A549 (cell line): ENCODE measurements at regions of chr5 and their contacts with region 1.

Region 1: GRCh38 chr5:76175051-76175666 is 92.0 kb downstream of the SV2C start:
- DNase-seq: peak; percentile 59 to 74
- ATAC-seq: peak; percentile 83 to 95; a peak in 5 of 6 replicates
- H3K4me3 ChIP-seq: no peak overlapping the region
- H3K27ac ChIP-seq: no peak overlapping the region
- H3K4me1 ChIP-seq: no peaks in the 10 kb centered on the region
- CTCF ChIP-seq: peak; percentile 77
- EP300 ChIP-seq: no peak
- POLR2A ChIP-seq: no peak
- RAD21 ChIP-seq: peak; percentile 59 to 67; a peak in 4 of 5 replicates

Region 2: DNA sequence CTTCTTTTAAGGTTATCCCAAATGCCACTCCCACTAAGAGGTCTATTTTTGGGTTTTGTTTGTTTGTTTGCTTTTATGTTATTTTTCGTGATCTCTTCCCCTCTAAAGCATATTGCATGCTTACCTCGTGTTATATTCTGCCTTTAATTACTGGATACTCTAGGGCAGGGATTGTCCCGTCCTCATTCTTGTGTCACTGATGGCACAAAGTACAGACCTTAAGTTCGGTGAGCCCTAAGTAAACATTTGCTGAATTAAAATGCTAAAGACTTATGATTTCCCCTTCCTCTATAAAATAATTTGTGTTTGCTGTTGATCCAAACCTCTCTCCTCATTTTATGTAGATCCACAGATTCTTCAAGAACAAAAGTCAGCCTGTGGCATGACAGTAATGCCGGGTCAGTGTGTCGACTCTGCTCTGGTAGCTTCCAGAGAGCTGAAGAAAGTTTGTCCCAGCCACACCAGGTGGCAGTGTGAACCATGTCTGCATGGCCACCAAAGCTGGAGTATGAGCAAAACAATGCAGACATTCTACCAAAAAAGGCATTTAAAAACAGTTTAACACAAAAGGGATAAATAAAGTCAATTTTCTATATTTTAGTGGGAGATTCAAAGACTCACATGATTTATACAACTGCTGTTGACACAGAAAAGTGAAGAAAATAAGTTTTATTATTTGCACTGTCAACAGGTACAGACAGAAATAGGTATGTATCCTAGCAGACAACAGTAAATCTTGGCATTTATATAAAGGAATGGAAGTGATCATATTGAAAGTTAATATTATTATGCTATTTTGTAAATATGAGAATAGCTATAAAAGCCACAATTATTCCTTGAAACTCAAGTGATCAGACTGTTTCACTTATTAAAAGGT is 440.0 kb before region 1 on chr5:
- CTCF ChIA-PET with region 1: interaction called, 11 read pairs
- POLR2A ChIA-PET with region 1: no interaction called
- DNase-seq: peak; percentile 5 to 57
- ATAC-seq: peak; percentile 92 to 93
- H3K4me3 ChIP-seq: no peak overlapping the region
- H3K27ac ChIP-seq: no peak overlapping the region
- H3K4me1 ChIP-seq: no peaks in the 10 kb centered on the region
- CTCF ChIP-seq: peak; percentile 59
- EP300 ChIP-seq: no peak
- POLR2A ChIP-seq: no peak
- RAD21 ChIP-seq: peak; percentile 60 to 67

Region 3: GRCh38 chr5:76187386-76187785 is 12.2 kb after region 1 on chr5:
- CTCF ChIA-PET with region 1: interaction called, 20 read pairs
- POLR2A ChIA-PET with region 1: no interaction called
- DNase-seq: no peak
- ATAC-seq: no peak
- H3K4me3 ChIP-seq: no peak overlapping the region
- H3K27ac ChIP-seq: no peak overlapping the region
- H3K4me1 ChIP-seq: no peaks in the 10 kb centered on the region
- CTCF ChIP-seq: no peak
- EP300 ChIP-seq: no peak
- POLR2A ChIP-seq: no peak
- RAD21 ChIP-seq: no peak

Region 4: GRCh38 chr5:76194340-76194739 is 19.2 kb after region 1 on chr5:
- CTCF ChIA-PET with region 1: interaction called, 20 read pairs
- POLR2A ChIA-PET with region 1: no interaction called
- DNase-seq: no peak
- ATAC-seq: no peak
- H3K4me3 ChIP-seq: no peak overlapping the region
- H3K27ac ChIP-seq: no peak overlapping the region
- H3K4me1 ChIP-seq: no peaks in the 10 kb centered on the region
- CTCF ChIP-seq: no peak
- EP300 ChIP-seq: no peak
- POLR2A ChIP-seq: no peak
- RAD21 ChIP-seq: no peak

Region 5: GRCh38 chr5:76207120-76207519 is 32.0 kb after region 1 on chr5:
- CTCF ChIA-PET with region 1: interaction called, 11 read pairs
- POLR2A ChIA-PET with region 1: no interaction called
- DNase-seq: no peak
- ATAC-seq: no peak
- H3K4me3 ChIP-seq: no peak overlapping the region
- H3K27ac ChIP-seq: no peak overlapping the region
- H3K4me1 ChIP-seq: no peaks in the 10 kb centered on the region
- CTCF ChIP-seq: no peak
- EP300 ChIP-seq: no peak
- POLR2A ChIP-seq: no peak
- RAD21 ChIP-seq: no peak